H1 (cell line): ENCODE measurements at regions of chr13 and their contacts with region 1.

Region 1: GRCh38 chr13:106536244-106537034 is 977 bp upstream of the EFNB2 start:
- DNase-seq: peak; percentile 75 to 97
- H3K4me3 ChIP-seq: peak overlapping the region; percentile 16 to 68 (median 50); a peak in 7 of 8 replicates
- H3K27ac ChIP-seq: no peak overlapping the region
- H3K4me1 ChIP-seq: peaks cover 0 to 14% (median 6%) of the 10 kb centered on the region in 4 experiments; a peak in 3 of 7 replicates
- H3K27me3 ChIP-seq: peaks cover 0 to 14% (median 7%) of the 10 kb centered on the region in 4 experiments; a peak in 5 of 7 replicates
- CTCF ChIP-seq: peak; percentile 91 to 97 (median 96)
- EP300 ChIP-seq: no peak; a peak in 1 of 3 replicates
- POLR2A ChIP-seq: no peak
- RAD21 ChIP-seq: peak; percentile 96 to 97

Region 2: DNA sequence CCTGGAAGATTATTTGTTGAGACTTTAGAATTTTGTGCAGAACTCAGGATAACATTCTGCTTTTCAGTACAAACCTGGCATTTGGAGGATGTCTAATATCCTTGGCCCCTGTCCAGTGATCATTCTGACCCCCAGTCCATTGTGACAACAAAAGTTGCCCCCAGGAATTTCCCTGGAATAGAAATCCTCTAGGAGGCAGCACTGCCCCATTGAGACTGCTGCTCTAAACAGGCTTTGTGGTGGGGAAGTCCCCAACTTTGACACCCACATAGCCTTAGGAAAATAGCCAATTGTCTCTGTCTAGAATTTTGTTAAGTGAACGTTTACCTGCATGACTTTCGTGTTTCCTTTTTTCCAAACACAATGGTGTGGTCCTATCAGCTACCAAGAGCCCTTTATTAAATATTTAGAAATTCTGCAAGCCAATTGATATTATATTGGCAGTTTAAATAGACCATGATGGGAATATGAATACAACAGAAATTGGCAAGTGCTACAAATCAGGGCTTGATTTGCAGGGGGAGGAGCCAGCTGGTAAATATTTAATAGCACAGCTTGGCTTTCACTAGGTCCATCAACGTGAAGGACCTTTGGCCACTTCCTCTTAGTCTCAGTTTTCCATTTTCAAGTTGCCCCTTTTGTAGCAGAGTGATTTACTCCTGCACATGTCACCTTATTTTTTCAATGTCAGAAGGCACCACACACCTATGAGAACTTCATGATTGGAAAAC is 452.7 kb before region 1 on chr13:
- CTCF ChIA-PET with region 1: interaction called, 11 read pairs
- POLR2A ChIA-PET with region 1: no interaction called
- DNase-seq: no peak
- H3K4me3 ChIP-seq: no peak overlapping the region
- H3K27ac ChIP-seq: no peak overlapping the region
- H3K4me1 ChIP-seq: peaks cover 0 to 4% (median 0%) of the 10 kb centered on the region in 4 experiments; a peak in 2 of 7 replicates
- H3K27me3 ChIP-seq: no peaks in the 10 kb centered on the region
- CTCF ChIP-seq: peak; percentile 37 to 80 (median 78)
- EP300 ChIP-seq: no peak
- POLR2A ChIP-seq: no peak
- RAD21 ChIP-seq: peak; percentile 95 to 97

Region 3: GRCh38 chr13:106548064-106548696 is 11.7 kb after region 1 on chr13:
- CTCF ChIA-PET with region 1: interaction called, 6 read pairs
- POLR2A ChIA-PET with region 1: interaction called, 11 read pairs
- DNase-seq: no peak
- H3K4me3 ChIP-seq: no peak overlapping the region
- H3K27ac ChIP-seq: no peak overlapping the region
- H3K4me1 ChIP-seq: no peaks in the 10 kb centered on the region
- H3K27me3 ChIP-seq: no peaks in the 10 kb centered on the region
- CTCF ChIP-seq: no peak
- EP300 ChIP-seq: no peak
- POLR2A ChIP-seq: 0 out of 3 replicates have a peak, but pooled peaks of 1 of the 2 experiments have one; percentile 31
- RAD21 ChIP-seq: no peak

Region 4: DNA sequence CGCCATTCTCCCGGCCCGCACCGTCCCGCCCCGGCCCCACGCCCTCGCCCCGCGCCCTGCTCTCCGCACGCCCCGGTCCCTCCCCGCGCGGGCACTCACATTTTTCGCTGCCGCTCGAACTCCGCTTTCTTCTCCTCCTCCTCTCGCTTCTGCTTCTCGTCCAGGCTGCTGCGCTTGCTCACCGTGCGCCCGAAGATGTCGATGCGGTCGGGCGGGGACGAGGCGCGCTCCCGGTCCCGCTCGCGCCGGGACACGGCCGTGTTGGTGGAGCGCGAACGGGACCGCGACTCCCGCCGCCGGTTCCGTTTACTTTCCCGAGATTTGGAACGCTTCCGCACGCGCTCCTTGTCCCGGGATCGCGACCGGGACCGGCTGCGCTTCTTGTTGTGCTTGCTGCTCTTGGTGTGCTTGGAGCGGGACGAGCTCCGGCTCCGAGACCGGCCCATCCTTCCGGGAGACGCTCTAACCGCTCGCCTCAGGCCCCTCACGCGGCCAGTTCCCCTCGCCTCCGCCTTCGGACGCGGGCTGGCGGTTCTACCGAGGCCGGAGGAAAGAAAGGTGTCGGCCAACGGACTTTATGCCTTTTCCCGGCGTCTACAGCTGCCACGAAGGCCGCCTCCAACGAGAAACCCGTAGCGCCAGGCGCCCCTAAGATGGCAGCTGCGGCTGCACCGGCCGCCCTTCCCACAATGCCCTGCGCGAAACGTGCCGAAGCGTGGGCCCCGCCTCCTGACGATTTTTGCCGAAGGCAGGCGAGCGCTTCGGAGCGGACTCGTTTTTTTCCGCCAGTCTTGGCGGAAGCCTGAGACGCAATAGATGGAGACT is 31.2 kb after region 1 on chr13 and contains the start of gene ARGLU1:
- CTCF ChIA-PET with region 1: interaction called, 4 read pairs
- POLR2A ChIA-PET with region 1: interaction called, 15 read pairs
- DNase-seq: peak; percentile 72 to 98
- H3K4me3 ChIP-seq: peak within 1 kb of the TSS; percentile 89 to 98 (median 94)
- H3K27ac ChIP-seq: peak within 1 kb of the TSS; percentile 98
- H3K4me1 ChIP-seq: peaks cover 4 to 13% (median 11%) of the 10 kb centered on the region in 4 experiments; a peak in 5 of 7 replicates
- H3K27me3 ChIP-seq: no peaks in the 10 kb centered on the region
- CTCF ChIP-seq: no peak
- EP300 ChIP-seq: no peak
- POLR2A ChIP-seq: peak; percentile 95 to 97
- RAD21 ChIP-seq: no peak
- total RNA-seq, gene ARGLU1: 81.2 and 84.9 TPM in 2 replicates